Heart left ventricle (tissue), 16 donors: ENCODE measurements at regions of chr7 and their contacts with region 1.

Region 1: GRCh38 chr7:72493850-72494661 is 81.9 kb upstream of the CALN1 start:
- DNase-seq: peak in 4 of 5 donors; percentile 32 to 70 (median 42)
- ATAC-seq: peak in 3 of 4 donors; percentile 30 to 47 (median 35)
- H3K4me3 ChIP-seq: no peak overlapping the region
- H3K27ac ChIP-seq: no peak overlapping the region
- H3K4me1 ChIP-seq: peaks cover 0 to 12% (median 0%) of the 10 kb centered on the region in 12 donors
- H3K27me3 ChIP-seq: no peaks in the 10 kb centered on the region
- CTCF ChIP-seq: peak; percentile 47 to 82 (median 66)
- POLR2A ChIP-seq: no peak

Region 2: GRCh38 chr7:71752171-71752935 is 741.7 kb before region 1 on chr7:
- intact Hi-C with region 1: loop called in 8 of 10 experiments (anchors 2 to 10 kb)
- DNase-seq: peak in 3 of 5 donors; percentile 30 to 78 (median 31)
- ATAC-seq: peak in 3 of 4 donors; percentile 81 to 90 (median 89)
- H3K4me3 ChIP-seq: no peak overlapping the region
- H3K27ac ChIP-seq: no peak overlapping the region
- H3K4me1 ChIP-seq: peaks cover 0 to 6% (median 0%) of the 10 kb centered on the region in 12 donors
- H3K27me3 ChIP-seq: peaks cover 3 to 40% (median 12%) of the 10 kb centered on the region in 9 donors
- CTCF ChIP-seq: peak; percentile 43 to 71 (median 56)
- POLR2A ChIP-seq: no peak

Region 3: DNA sequence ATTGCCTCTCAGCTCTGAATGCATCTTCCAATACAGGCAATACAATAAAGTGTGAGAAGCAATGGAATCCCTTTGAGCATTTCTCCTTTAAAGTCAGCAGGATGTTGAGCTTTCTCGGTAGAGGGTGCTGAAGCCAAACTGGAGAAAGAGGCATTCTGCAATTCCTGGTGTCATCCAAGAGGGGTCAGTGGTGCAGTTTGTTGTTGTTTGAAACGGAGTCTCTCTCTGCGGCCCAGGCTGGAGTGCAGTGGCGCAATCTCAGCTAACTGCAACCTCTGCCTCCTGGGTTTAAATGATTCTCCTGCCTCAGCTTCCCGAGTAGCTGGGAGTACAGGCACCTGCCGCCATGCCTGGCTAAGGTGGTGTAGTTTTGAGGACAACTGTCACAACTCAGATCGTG is 568.4 kb before region 1 on chr7:
- intact Hi-C with region 1: loop called in 1 of 10 experiments (anchors 10 kb)
- DNase-seq: no peak
- ATAC-seq: no peak
- H3K4me3 ChIP-seq: no peak overlapping the region
- H3K27ac ChIP-seq: no peak overlapping the region
- H3K4me1 ChIP-seq: no peaks in the 10 kb centered on the region
- H3K27me3 ChIP-seq: no peaks in the 10 kb centered on the region
- CTCF ChIP-seq: peak in 1 of 12 donors; percentile 7
- POLR2A ChIP-seq: no peak

Region 4: DNA sequence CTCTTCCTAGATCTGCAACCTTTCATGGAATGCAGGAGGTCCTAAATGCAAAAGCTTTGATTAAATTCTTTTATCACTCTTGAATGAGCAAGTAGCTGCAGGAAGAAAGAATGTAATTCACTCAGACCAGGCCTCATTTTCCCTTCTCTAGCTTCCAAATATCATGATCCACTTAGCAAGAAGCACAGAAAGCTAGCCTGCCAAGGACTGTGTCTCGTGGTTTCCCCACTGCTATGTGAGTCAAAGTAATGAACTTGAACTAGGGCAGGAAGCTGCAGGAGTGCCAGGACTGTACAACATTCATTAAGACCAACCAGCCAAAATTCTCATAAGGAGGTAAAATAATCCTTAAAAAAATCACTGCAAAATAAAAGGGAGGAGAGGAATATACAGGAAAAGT is 461.1 kb before region 1 on chr7:
- intact Hi-C with region 1: loop called in 1 of 10 experiments (anchors 10 kb)
- DNase-seq: peak in 4 of 5 donors; percentile 24 to 63 (median 35)
- ATAC-seq: peak; percentile 73 to 89 (median 82)
- H3K4me3 ChIP-seq: no peak overlapping the region
- H3K27ac ChIP-seq: peak overlapping the region in 7 of 12 donors; percentile 14 to 66 (median 43)
- H3K4me1 ChIP-seq: peaks cover 0 to 18% (median 0%) of the 10 kb centered on the region in 12 donors
- H3K27me3 ChIP-seq: no peaks in the 10 kb centered on the region
- CTCF ChIP-seq: no peak
- POLR2A ChIP-seq: no peak

Region 5: DNA sequence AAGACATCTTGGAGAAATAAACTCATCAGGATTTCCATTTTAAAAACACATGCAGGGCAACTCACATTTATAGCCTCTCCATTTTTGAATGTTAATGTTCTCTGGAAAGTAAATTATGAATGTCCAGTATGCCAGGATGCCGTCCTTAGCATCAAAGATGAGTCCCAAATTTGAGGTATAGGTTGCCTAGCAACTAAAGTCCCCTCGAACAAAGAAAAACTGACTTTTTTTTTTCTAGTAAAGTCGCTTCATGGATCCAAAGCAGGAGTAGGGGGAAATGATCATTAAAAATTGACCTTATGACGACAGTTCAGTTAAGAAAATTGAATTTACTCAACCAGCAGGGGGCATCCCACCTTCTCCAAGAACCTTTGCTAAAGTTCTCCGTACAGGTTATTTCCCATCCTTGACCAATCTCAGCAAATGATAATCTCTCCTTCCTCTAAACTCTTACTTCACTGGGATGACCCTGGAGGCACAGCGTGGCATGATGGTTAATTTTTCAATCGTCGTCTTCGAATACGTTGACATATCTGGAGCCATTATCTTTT is 310.3 kb before region 1 on chr7:
- intact Hi-C with region 1: loop called in 1 of 10 experiments (anchors 10 kb)
- DNase-seq: no peak
- ATAC-seq: no peak
- H3K4me3 ChIP-seq: no peak overlapping the region
- H3K27ac ChIP-seq: no peak overlapping the region
- H3K4me1 ChIP-seq: no peaks in the 10 kb centered on the region
- H3K27me3 ChIP-seq: peaks cover 0 to 9% (median 0%) of the 10 kb centered on the region in 9 donors
- CTCF ChIP-seq: peak in 8 of 12 donors; percentile 8 to 32 (median 24)
- POLR2A ChIP-seq: no peak

Region 6: DNA sequence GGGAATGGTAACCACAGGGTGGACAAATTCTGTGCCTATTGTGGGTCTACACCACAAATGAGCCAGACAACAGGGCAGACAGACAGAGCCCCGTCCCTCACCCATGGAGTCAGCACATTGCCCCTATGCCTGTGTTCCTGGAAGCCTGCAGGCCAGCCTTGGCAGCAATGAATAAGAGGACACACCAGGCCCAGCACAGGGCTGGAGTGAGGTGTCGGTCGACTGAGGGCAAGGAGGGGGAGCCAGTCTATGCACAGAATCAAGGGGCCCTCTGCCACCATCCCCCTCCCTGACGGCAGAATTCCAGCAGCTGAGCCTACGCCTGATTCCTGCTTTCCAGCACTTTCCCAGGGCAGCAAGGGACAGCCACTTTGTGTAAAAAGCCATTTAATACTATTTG is 180.2 kb before region 1 on chr7:
- intact Hi-C with region 1: no loop called
- DNase-seq: no peak
- ATAC-seq: no peak
- H3K4me3 ChIP-seq: no peak overlapping the region
- H3K27ac ChIP-seq: no peak overlapping the region
- H3K4me1 ChIP-seq: no peaks in the 10 kb centered on the region
- H3K27me3 ChIP-seq: peaks cover 0 to 4% (median 0%) of the 10 kb centered on the region in 9 donors
- CTCF ChIP-seq: no peak
- POLR2A ChIP-seq: no peak

Region 7: GRCh38 chr7:72760602-72761001 is 266.5 kb after region 1 on chr7:
- intact Hi-C with region 1: no loop called
- DNase-seq: no peak
- ATAC-seq: no peak
- H3K4me3 ChIP-seq: no peak overlapping the region
- H3K27ac ChIP-seq: no peak overlapping the region
- H3K4me1 ChIP-seq: no peaks in the 10 kb centered on the region
- H3K27me3 ChIP-seq: no peaks in the 10 kb centered on the region
- CTCF ChIP-seq: no peak
- POLR2A ChIP-seq: no peak

Region 8: DNA sequence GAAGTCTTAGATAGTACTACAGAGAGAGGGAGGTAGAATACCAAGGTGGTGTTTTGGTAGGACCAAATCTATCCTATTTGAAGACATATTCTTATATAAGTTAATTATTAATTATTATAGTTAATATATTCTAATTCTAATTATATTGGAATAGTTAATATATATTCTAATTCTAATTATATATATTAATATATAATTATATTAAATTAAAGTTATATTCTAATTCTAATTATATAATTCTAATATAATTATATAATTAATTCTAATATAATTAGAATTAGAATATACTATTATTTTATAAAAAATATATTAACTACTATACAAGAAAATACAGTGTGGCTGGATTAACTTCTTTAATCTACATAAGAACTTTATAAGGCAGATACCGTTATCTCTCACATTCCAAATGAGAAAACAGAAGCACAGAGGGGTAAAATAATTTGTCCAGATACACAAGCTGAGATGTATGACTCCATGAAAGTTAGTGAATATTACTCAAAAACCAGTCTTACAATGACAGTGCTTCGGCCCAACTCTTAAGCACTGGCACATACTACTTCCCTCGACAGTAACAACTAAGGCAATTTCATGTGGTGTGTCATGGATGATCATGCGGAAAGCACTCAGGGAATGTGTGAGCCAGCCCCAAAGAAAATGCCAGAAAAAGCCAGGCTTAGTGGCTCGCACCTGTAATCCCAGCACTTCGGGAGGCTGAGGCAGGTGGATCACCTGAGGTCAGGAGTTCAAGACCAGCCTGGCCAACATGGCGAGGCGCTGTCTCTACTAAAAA is 291.3 kb after region 1 on chr7:
- intact Hi-C with region 1: loop called in 2 of 10 experiments (anchors 5 to 10 kb)
- DNase-seq: no peak
- ATAC-seq: no peak
- H3K4me3 ChIP-seq: no peak overlapping the region
- H3K27ac ChIP-seq: no peak overlapping the region
- H3K4me1 ChIP-seq: peaks cover 0 to 10% (median 5%) of the 10 kb centered on the region in 12 donors
- H3K27me3 ChIP-seq: no peaks in the 10 kb centered on the region
- CTCF ChIP-seq: no peak
- POLR2A ChIP-seq: no peak